ENCODE measurements at regions of chr2 and their contacts with region 1.

Region 1: DNA sequence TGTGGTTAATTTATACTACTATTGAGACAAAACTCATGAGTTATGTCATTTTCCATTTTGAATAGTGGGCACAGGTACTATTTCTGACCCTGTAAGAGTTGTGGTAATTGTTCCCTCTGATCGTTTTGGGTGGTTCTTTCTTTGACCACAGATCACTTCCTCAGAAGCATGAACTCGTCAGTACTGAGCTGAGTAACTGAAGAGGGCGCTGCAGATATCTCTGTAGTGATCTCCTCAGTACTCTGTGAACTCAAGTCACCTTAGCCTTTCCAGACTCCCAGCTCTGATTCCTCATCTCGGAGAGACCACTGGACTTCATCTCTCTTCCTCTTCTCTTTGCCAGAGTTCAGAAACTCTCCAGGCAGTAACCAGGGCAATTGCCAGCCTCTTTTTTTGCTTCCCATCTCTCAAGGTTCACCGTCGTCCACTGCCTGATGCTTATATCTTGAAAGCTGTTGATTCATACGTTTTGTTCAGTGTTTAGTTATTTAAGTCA is 9.4 kb upstream of the IL1RL1 start:
- DNase-seq: peak; percentile 66
- ATAC-seq: peak; percentile 88
- H3K4me3 Mint-ChIP-seq: peak overlapping the region; percentile 17
- H3K27ac Mint-ChIP-seq: peak overlapping the region; percentile 58
- H3K4me1 Mint-ChIP-seq: peaks cover 46% of the 10 kb centered on the region
- H3K27me3 Mint-ChIP-seq: peaks cover 3% of the 10 kb centered on the region

Region 2: GRCh38 chr2:101030863-101031554 is 1270.9 kb before region 1 on chr2:
- CTCF ChIA-PET with region 1: no interaction called
- POLR2A ChIA-PET with region 1: no interaction called
- intact Hi-C with region 1: no loop called
- DNase-seq: no peak
- ATAC-seq: no peak
- H3K4me3 Mint-ChIP-seq: no peak overlapping the region
- H3K27ac Mint-ChIP-seq: no peak overlapping the region
- H3K4me1 Mint-ChIP-seq: no peaks in the 10 kb centered on the region
- H3K27me3 Mint-ChIP-seq: no peaks in the 10 kb centered on the region

Region 3: DNA sequence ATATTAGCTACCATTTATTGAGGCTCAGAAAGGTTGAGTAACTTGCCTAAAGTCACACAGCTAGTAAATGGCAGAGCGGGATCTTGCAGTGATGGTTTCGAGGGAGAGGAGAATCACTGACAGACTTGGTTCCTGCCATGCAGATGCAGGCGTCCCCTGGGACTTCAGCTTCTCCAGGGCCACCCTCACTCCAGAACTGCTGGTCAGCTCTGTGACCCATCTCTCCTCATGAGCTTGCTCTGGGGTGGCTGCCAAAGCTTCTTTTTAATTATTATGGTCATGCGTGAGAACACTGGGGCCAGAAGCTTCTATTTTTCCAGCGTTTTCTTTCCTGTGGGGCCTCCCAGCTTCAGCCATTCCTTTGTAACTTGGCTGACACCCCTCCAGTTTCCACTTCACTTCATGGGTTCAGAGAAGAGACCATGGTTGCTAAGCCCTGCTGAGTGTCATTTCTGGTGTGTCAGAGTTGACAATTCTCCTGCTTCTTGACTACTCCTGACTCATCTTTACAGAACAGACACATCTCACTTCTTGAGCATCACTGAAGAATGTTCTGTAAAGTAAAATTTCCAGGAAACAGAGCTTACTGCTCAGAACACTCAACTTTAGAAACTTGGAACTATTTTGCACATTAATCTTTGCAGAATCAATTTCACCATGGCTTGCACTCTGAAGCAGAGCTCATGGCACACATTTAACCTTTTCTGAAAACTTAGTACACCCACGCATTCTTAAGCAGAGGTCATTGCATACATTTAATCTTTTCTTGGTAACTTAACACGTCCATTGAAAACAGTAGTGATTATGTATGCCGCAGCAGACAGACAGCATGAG is 239.7 kb before region 1 on chr2:
- CTCF ChIA-PET with region 1: no interaction called
- POLR2A ChIA-PET with region 1: no interaction called
- intact Hi-C with region 1: no loop called
- DNase-seq: peak; percentile 60
- ATAC-seq: peak; percentile 90
- H3K4me3 Mint-ChIP-seq: no peak overlapping the region
- H3K27ac Mint-ChIP-seq: peak overlapping the region; percentile 86
- H3K4me1 Mint-ChIP-seq: peaks cover 46% of the 10 kb centered on the region
- H3K27me3 Mint-ChIP-seq: no peaks in the 10 kb centered on the region

Region 4: GRCh38 chr2:102251042-102251848 is 50.7 kb before region 1 on chr2:
- CTCF ChIA-PET with region 1: interaction called, 12 read pairs
- POLR2A ChIA-PET with region 1: no interaction called
- intact Hi-C with region 1: no loop called
- DNase-seq: peak; percentile 85
- ATAC-seq: peak; percentile 68
- H3K4me3 Mint-ChIP-seq: peak overlapping the region; percentile 73
- H3K27ac Mint-ChIP-seq: peak overlapping the region; percentile 76
- H3K4me1 Mint-ChIP-seq: peaks cover 38% of the 10 kb centered on the region
- H3K27me3 Mint-ChIP-seq: no peaks in the 10 kb centered on the region

Region 5: DNA sequence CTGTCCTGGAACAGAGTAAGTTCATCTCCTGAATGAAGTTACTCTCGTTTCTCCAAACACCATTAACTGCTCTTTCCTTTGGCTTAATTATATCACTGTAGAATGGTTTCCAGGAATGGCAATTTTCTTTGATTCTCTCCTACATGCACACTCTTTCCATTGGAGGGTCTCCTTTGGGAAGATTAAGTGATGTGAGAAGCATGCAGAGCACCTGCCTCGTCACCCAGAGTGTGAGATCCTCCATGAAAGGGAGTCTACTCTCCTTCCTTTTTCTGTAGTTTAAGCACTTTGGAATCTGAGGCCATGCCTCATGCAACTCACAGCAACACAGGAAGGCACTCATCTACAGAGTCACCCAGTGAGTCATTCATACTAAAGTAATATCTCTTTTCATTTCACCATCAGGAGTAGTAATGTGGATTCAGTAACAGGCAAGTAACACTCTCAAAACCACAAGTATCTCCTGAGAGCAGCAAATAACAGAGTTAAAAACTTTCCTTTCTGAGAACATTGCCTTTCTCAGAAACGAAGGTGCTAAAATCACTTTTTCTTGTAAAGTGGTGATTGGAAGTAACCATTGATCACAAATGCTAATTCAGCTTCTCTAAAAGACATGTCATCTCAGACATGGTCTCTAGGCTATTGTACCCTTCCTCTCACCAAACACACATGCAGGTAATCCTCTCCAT is 43.4 kb before region 1 on chr2:
- CTCF ChIA-PET with region 1: interaction called, 6 read pairs
- POLR2A ChIA-PET with region 1: no interaction called
- intact Hi-C with region 1: loop called (anchors 1 kb)
- DNase-seq: peak; percentile 63
- ATAC-seq: peak; percentile 92
- H3K4me3 Mint-ChIP-seq: peak overlapping the region; percentile 26
- H3K27ac Mint-ChIP-seq: peak overlapping the region; percentile 97
- H3K4me1 Mint-ChIP-seq: peaks cover 45% of the 10 kb centered on the region
- H3K27me3 Mint-ChIP-seq: no peaks in the 10 kb centered on the region

Region 6: DNA sequence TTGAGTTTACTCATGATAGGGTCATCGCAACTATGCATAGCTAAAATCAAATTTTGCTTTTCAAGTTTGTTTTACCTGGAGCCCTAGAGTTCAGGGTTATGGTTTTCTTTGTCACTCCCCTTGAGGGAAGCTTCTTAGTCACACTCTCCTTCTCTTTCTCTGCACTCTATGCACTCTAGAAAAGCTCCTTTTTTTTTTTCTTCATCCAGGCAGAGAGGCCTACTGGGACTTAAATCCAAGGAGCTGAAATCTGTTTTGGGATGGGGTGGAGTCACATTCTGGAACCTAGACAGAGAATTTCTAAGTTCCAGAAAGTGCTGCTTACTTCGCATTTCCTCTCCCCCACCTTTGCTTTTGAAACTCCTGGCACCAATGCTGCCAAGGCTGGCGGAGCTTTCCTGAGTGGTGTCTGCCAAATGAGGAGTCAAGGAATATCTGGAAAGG is 34.6 kb after region 1 on chr2:
- CTCF ChIA-PET with region 1: interaction called, 3 read pairs
- POLR2A ChIA-PET with region 1: no interaction called
- intact Hi-C with region 1: loop called in 1 of 2 experiments (anchors 5 kb)
- DNase-seq: no peak
- ATAC-seq: peak; percentile 66
- H3K4me3 Mint-ChIP-seq: no peak overlapping the region
- H3K27ac Mint-ChIP-seq: no peak overlapping the region
- H3K4me1 Mint-ChIP-seq: peaks cover 15% of the 10 kb centered on the region
- H3K27me3 Mint-ChIP-seq: peaks cover 7% of the 10 kb centered on the region

Region 7: DNA sequence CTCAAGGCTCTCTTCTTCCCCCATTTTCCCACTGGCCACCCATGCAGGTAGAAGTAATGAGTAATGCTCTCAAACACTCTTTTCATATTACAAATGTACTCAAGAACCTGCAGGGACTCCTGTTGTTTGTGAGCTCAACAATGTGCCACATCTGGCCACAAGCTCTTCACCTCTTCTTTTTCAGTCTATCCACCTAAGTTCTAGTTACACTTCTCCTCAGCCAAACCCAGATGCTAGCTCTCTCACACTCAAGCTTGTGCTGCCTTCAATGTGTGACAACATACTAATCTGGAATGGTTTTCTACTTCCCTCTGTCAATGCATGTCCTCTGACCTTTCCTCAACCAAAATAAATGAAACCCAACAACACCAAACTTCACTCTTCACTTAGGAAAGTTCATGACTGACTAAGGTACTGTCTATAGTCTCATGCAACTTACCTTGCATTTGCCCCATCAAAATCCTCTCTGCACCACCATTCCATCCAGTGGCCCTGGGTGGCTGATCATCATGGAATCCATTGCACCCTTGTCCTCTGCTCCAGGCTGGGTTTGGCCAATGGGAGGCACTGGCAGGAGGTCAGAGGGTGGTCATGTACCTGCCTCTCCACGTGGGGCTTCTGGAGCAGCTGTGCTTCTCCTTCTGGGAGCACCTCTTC is 48.4 kb after region 1 on chr2:
- CTCF ChIA-PET with region 1: interaction called, 4 read pairs
- POLR2A ChIA-PET with region 1: no interaction called
- intact Hi-C with region 1: loop called in 1 of 2 experiments (anchors 2 kb)
- DNase-seq: peak; percentile 45
- ATAC-seq: peak; percentile 79
- H3K4me3 Mint-ChIP-seq: no peak overlapping the region
- H3K27ac Mint-ChIP-seq: no peak overlapping the region
- H3K4me1 Mint-ChIP-seq: no peaks in the 10 kb centered on the region
- H3K27me3 Mint-ChIP-seq: peaks cover 2% of the 10 kb centered on the region

Region 8: DNA sequence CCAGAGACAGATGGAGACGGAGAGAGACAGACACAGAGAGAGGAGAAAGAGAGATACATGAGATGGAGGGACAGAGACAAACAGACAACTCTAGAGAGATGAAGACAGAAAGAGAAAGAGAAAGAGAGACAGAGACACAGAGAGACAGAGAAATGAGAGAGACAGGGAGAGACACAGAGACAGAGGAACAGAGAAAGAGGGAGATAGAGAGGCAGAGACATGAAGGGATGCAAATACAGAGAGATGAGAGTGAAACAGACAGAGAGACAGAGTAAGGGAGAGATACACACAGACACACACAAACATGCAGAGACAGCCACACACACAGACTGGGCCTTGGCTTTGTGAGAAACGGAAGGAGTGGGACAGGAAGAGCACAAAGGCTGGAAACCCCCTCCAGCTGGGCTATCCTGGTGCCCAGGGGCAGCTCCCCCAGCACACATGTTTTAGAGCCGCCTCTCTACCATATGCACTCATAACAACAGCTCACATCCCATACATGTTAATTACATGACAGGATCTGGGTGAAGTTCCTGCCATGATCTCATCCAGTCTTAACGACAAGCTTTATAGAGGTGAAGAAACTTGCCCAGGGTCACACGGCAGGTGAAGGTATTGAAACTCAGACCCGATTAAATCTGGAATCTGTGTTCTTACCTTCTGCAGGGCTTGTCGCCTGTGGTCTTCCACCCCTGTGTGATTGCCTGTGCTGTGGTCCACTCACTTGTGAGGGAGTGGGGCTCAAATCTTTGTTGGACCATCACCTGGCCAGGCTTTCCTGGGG is 86.0 kb after region 1 on chr2:
- CTCF ChIA-PET with region 1: no interaction called
- POLR2A ChIA-PET with region 1: no interaction called
- intact Hi-C with region 1: no loop called
- DNase-seq: no peak
- ATAC-seq: no peak
- H3K4me3 Mint-ChIP-seq: no peak overlapping the region
- H3K27ac Mint-ChIP-seq: peak overlapping the region; percentile 35
- H3K4me1 Mint-ChIP-seq: peaks cover 30% of the 10 kb centered on the region
- H3K27me3 Mint-ChIP-seq: no peaks in the 10 kb centered on the region

Region 9: DNA sequence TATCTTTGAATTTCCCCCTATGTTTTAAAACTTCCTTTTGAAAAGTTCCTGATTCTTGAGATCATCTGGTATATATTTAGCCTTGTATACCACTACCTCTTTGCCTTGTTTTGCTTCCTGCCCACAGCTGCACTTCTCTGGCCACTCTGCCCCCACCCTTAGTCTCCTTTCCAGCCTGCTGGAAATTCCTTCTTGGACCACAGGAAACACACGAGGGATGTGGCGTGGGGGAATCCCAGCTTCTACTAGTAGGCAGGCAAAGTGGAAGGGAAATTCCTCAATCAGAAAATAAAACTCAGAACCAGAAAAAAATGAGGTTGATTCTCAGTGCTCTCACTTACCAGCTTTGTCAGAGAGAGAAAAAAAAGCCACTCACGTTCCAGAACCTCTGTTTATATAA is 134.4 kb after region 1 on chr2:
- CTCF ChIA-PET with region 1: interaction called, 4 read pairs
- POLR2A ChIA-PET with region 1: no interaction called
- intact Hi-C with region 1: loop called in 1 of 2 experiments (anchors 2 kb)
- DNase-seq: peak; percentile 38
- ATAC-seq: no peak
- H3K4me3 Mint-ChIP-seq: no peak overlapping the region
- H3K27ac Mint-ChIP-seq: peak overlapping the region; percentile 71
- H3K4me1 Mint-ChIP-seq: peaks cover 30% of the 10 kb centered on the region
- H3K27me3 Mint-ChIP-seq: no peaks in the 10 kb centered on the region